ENCODE measurements at regions of chr3 and their contacts with region 1.

Region 1: DNA sequence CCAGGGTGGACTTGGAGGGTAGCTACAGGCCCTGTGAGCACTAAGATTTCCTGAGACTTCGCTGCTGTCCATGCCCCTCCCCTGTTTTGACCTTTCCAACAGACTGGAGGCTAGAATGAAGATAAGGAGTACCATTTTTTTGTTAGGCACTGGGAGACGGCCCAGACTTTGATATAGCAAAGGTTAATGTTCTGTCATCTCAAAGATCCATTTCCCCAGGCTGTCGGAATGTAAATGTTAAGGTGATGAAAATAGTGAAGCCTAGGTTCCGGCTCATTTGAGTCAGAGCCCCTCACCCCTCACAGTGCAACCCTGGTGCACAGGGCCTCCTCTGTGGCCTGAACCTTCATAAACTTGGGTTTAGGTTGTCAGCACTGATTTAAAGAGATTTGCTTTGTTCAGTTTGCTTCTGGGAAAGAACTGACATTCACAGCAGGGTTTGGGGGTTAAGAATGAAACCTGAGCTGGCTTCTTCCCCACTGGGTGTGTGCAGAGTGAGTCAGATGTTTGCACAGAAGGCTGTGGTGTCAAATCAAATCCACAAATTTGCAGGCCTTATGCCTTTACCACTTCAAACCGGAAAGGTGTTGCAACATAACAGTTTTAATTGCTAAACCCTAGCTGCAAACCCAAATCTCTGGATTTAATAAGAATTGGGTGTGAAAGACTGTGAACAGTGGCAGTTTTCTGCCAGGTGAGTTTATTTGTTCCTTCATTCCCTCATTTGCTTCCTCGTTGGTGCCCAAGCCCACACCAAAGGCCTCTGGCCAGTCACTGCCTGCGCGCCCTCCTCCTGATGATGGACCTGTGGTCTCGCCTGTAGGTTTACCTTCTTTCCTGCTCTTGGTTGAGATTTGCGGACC is 20.6 kb upstream of the KCTD6 start:
- DNase-seq: peak; percentile 83
- ATAC-seq: peak; percentile 88
- H3K4me3 ChIP-seq: no peak overlapping the region
- H3K27ac ChIP-seq: peak overlapping the region; percentile 61
- H3K4me1 ChIP-seq: peaks cover 14% of the 10 kb centered on the region
- H3K27me3 ChIP-seq: 0 out of 2 replicates have a peak, but pooled peaks cover 1% of the 10 kb centered on the region
- CTCF ChIP-seq: no peak
- POLR2A ChIP-seq: no peak
- RAD21 ChIP-seq: no peak

Region 2: DNA sequence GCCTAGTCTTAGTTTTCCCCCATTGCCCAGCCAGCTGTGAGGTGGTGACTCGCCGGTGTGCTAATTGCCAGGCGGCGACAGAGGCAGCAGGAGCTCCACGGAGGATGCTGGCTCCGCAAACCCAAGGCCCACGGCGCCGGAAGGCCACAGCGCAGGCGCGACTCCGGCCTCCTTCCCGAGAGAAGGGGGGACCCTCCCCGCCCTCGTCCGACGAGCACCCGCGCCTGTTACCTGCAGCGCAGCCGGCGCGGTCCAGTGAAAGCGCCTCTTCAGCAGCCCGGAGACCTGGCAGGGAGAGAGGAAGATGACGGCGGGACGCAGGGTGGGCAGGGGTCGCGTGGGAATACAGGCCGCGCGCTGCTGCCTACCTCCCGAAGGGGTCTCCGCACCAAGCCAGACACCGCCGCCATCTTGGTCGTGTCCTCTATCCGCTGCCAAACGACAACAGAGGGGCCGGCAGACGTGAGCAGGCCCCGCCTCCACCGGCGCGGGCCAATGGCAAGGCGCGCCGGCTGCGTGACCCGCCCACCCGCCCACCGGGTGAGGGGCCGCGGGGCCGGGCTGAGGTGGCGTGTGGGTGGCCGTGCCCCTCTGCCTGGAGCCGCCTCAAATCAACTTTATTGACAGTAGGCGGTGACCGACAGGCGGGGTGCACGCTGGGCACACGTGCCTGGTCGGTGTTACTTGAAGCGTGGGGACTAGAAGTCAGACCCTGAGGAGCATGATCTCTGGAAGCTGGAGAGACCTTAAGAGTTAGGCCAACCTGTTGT is 37.7 kb before region 1 on chr3 and contains the start of gene PDHB:
- CTCF ChIA-PET with region 1: no interaction called
- POLR2A ChIA-PET with region 1: no interaction called
- dilution Hi-C with region 1: no loop called
- in situ Hi-C with region 1: no loop called
- intact Hi-C with region 1: loop called (anchors 5 kb)
- DNase-seq: peak; percentile 86
- ATAC-seq: peak; percentile 91
- H3K4me3 ChIP-seq: peak within 1 kb of the TSS; percentile 92
- H3K27ac ChIP-seq: peak within 1 kb of the TSS; percentile 98
- H3K4me1 ChIP-seq: peaks cover 12% of the 10 kb centered on the region
- H3K27me3 ChIP-seq: no peaks in the 10 kb centered on the region
- CTCF ChIP-seq: no peak
- POLR2A ChIP-seq: peak; percentile 62; the same call in 1 of the 2 replicates
- RAD21 ChIP-seq: 0 out of 2 replicates have a peak, but pooled peaks have one; percentile 7
- total RNA-seq, gene PDHB: 73.5 and 86.9 TPM in 2 replicates

Region 3: GRCh38 chr3:58608648-58609047 is 137.4 kb after region 1 on chr3:
- CTCF ChIA-PET with region 1: no interaction called
- POLR2A ChIA-PET with region 1: no interaction called
- dilution Hi-C with region 1: no loop called
- in situ Hi-C with region 1: no loop called
- intact Hi-C with region 1: no loop called
- DNase-seq: no peak
- ATAC-seq: no peak
- H3K4me3 ChIP-seq: no peak overlapping the region
- H3K27ac ChIP-seq: no peak overlapping the region
- H3K4me1 ChIP-seq: no peaks in the 10 kb centered on the region
- H3K27me3 ChIP-seq: peaks cover 32% of the 10 kb centered on the region
- CTCF ChIP-seq: no peak
- POLR2A ChIP-seq: no peak
- RAD21 ChIP-seq: no peak

Region 4: DNA sequence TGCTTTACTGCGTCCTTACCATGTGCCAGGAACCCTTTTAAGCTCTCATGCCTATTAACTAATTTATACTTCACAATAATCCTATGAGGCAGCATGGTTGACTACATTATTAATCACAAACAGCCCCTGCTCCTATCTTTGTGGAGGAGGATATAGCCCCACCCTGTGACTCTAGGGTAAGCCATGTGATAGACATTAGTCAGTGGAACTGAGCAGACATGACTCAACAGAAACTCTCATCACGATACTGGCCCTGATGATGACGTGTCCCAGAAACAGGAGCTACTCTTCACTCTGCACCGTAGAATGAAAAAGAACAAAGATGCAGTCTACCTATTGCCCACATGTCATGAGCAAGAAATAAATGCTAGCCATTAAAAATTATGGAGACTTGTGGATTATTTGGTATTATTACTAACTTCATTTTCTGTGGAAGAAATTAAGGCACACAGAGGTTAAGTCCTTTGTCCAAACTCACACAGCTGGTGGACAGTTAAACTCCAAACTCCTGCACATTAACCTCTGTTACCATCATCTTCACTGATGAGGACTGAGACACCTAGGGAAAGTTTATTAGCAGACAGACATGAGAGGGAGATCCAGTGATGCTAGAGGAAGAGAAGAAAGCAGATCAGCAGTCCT is 527.3 kb after region 1 on chr3:
- CTCF ChIA-PET with region 1: no interaction called
- POLR2A ChIA-PET with region 1: no interaction called
- dilution Hi-C with region 1: no loop called
- in situ Hi-C with region 1: no loop called
- intact Hi-C with region 1: no loop called
- DNase-seq: peak; percentile 98
- ATAC-seq: peak; percentile 95
- H3K4me3 ChIP-seq: no peak overlapping the region
- H3K27ac ChIP-seq: peak overlapping the region; percentile 40
- H3K4me1 ChIP-seq: peaks cover 10% of the 10 kb centered on the region
- H3K27me3 ChIP-seq: no peaks in the 10 kb centered on the region
- CTCF ChIP-seq: no peak
- POLR2A ChIP-seq: no peak
- RAD21 ChIP-seq: no peak

Measured in IMR-90 (cell line).